Tibial artery (tissue), 4 donors: ENCODE measurements at regions of chr3 and their contacts with region 1.

Region 1: DNA sequence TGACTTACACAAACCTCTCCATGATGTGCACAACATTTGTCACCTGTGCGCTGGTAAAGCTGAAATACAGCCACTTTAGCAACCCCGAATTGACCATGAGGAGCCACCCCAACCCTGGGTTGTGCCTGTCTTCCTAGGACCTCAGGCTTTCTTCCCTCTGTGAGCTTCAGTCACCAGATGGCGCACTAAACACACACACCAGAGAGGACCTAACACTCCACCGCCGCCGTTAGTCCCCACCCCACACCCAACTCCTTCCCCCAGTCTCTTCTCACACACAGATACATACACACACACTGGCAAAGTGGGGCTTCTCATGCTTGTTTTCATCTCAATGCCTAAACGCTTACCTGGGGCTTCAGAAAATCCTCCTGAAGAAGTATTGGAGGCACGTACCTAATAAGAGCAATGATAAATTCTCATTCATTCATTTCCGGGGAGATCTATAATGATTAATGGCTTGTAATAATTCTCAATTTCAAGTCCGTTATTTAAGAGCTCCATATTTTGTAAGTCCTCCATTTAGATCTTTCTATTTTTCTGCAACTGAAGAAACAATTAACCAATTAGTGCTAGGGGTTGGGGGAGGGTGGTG is 2.1 kb upstream of the CCDC80 start:
- DNase-seq: peak; percentile 90 to 92
- H3K4me3 ChIP-seq: no peak overlapping the region
- H3K27ac ChIP-seq: no peak overlapping the region
- H3K4me1 ChIP-seq: peaks cover 0 to 61% (median 33%) of the 10 kb centered on the region in 4 donors
- H3K27me3 ChIP-seq: no peaks in the 10 kb centered on the region
- CTCF ChIP-seq: peak; percentile 76 to 79

Region 2: DNA sequence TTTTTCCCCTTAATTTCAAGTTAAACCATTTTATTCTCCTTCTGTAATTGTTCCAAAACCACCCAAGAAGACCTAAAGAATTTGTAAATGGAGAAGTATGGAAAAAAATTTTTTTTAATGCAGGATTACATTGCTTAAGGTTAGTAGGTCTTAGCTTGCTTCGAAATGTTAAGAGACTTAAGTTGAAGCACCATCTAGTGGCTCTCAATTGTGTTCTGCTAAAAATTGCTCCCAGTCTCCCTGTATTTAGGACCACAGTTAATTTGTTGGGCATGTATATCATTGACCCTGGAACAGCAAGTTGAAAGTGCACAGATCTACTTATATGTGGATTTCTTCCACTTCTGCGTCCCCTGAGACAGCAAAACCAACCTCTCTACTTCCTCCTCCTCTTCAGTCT is 171.3 kb after region 1 on chr3:
- intact Hi-C with region 1: loop called (anchors 10 kb)
- DNase-seq: no peak
- H3K4me3 ChIP-seq: no peak overlapping the region
- H3K27ac ChIP-seq: no peak overlapping the region
- H3K4me1 ChIP-seq: peaks cover 0 to 37% (median 12%) of the 10 kb centered on the region in 4 donors
- H3K27me3 ChIP-seq: no peaks in the 10 kb centered on the region
- CTCF ChIP-seq: peak; percentile 39 to 50

Region 3: GRCh38 chr3:112984485-112984884 is 341.5 kb after region 1 on chr3:
- intact Hi-C with region 1: loop called (anchors 2 kb)
- DNase-seq: no peak
- H3K4me3 ChIP-seq: no peak overlapping the region
- H3K27ac ChIP-seq: no peak overlapping the region
- H3K4me1 ChIP-seq: no peaks in the 10 kb centered on the region
- H3K27me3 ChIP-seq: no peaks in the 10 kb centered on the region
- CTCF ChIP-seq: no peak

Region 4: DNA sequence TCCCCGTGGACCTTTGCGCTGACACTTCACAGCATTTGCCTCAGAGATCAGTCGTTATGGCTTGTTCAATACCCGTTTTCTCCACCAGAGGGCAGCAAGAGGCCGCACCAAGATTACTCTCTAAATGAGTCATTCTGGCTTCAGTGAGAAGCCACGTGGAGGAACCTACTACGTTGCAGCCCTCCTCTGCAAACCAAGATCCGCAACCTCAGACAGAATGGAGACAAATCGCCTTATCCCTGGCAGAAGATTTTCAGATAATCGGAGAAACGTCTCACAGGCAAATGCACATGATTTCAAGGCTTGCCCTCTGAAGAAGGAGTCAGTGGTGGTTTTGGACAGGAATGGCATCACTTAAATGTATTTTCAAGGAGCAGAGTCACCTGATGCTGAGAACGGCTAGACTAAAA is 408.3 kb after region 1 on chr3:
- intact Hi-C with region 1: no loop called
- DNase-seq: peak; percentile 88 to 91
- H3K4me3 ChIP-seq: no peak overlapping the region
- H3K27ac ChIP-seq: peak overlapping the region in 1 of 2 donors; percentile 34
- H3K4me1 ChIP-seq: peaks cover 0 to 7% (median 5%) of the 10 kb centered on the region in 4 donors
- H3K27me3 ChIP-seq: no peaks in the 10 kb centered on the region
- CTCF ChIP-seq: peak; percentile 92 to 97